Aorta (tissue), 5 donors: ENCODE measurements at regions of chr11 and their contacts with region 1.

Region 1: GRCh38 chr11:112113539-112114457 is 27.1 kb downstream of the SDHD start:
- DNase-seq: no peak
- ATAC-seq: peak; percentile 75
- H3K4me3 ChIP-seq: no peak overlapping the region
- H3K27ac ChIP-seq: no peak overlapping the region
- H3K4me1 ChIP-seq: no peaks in the 10 kb centered on the region
- H3K27me3 ChIP-seq: no peaks in the 10 kb centered on the region

Region 2: GRCh38 chr11:112004389-112004788 is 109.4 kb before region 1 on chr11:
- intact Hi-C with region 1: no loop called
- DNase-seq: no peak
- ATAC-seq: no peak
- H3K4me3 ChIP-seq: no peak overlapping the region
- H3K27ac ChIP-seq: no peak overlapping the region
- H3K4me1 ChIP-seq: no peaks in the 10 kb centered on the region
- H3K27me3 ChIP-seq: no peaks in the 10 kb centered on the region

Region 3: DNA sequence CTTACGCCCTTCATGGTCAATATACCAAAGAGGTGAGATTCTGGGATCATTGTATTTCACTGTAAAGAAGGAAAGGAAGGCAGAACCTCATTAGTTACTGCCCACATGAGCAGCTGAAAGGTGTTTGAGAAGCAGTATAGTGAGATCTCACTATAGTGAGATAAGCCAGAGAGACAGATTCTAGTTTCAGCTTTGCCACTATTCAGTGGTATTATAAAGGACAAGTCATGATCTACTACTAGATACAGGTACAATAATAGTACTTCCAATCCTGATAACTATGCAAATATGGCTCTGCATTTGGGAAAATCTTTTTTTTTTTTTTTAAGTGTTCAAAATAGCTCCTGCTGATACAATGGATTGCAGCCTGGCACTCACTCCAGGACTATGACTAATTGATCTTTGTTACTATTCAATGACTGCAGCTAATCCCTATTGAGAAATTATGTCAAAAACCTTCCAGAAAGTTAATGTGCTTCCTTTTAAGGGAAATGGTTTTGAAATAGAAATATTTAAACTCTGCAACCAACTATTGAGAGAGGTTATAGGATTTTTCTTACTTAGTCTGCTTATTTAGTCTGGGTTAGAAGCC is 96.9 kb before region 1 on chr11:
- intact Hi-C with region 1: no loop called
- DNase-seq: no peak
- ATAC-seq: peak; percentile 41
- H3K4me3 ChIP-seq: no peak overlapping the region
- H3K27ac ChIP-seq: peak overlapping the region; percentile 29 to 66
- H3K4me1 ChIP-seq: no peaks in the 10 kb centered on the region
- H3K27me3 ChIP-seq: no peaks in the 10 kb centered on the region

Region 4: GRCh38 chr11:112174789-112175598 is 61.2 kb after region 1 on chr11 and contains the start of gene BCO2:
- intact Hi-C with region 1: loop called (anchors 2 to 5 kb)
- DNase-seq: peak; percentile 90 to 91
- ATAC-seq: peak; percentile 97
- H3K4me3 ChIP-seq: peak within 1 kb of the TSS; percentile 31 to 57
- H3K27ac ChIP-seq: no peak within 1 kb of the TSS
- H3K4me1 ChIP-seq: no peaks in the 10 kb centered on the region
- H3K27me3 ChIP-seq: no peaks in the 10 kb centered on the region
- total RNA-seq, gene BCO2: 6.1 to 9.1 TPM